HAP-1 (cell line): ENCODE measurements at regions of chr15 and their contacts with region 1.

Region 1: DNA sequence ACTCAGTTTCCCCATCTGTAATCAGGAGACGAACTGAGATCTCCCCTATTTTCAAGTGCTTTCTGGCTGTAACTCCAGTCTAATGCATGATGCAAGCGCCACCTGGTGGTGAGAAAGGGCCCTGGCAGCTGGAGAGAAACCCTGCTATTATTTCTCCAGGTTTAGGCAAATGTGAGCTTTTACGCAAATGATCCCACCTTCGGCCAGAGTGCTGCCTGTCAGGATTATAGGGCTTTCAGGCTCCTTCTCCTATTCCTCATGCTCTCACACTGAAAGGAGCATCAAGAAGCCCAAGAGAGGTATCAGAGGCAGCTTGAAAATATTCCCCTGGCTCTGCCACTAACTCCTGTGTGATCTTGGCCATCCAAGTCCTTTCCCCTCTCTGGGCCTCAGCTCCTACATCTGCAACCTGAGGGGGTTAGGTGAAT is 93.9 kb upstream of the RASGRF1 start:
- DNase-seq: peak; percentile 83 to 90
- H3K4me3 ChIP-seq: no peak overlapping the region
- H3K4me1 ChIP-seq: no peaks in the 10 kb centered on the region
- H3K27me3 ChIP-seq: no peaks in the 10 kb centered on the region; the same call in 1 of the 2 replicates

Region 2: DNA sequence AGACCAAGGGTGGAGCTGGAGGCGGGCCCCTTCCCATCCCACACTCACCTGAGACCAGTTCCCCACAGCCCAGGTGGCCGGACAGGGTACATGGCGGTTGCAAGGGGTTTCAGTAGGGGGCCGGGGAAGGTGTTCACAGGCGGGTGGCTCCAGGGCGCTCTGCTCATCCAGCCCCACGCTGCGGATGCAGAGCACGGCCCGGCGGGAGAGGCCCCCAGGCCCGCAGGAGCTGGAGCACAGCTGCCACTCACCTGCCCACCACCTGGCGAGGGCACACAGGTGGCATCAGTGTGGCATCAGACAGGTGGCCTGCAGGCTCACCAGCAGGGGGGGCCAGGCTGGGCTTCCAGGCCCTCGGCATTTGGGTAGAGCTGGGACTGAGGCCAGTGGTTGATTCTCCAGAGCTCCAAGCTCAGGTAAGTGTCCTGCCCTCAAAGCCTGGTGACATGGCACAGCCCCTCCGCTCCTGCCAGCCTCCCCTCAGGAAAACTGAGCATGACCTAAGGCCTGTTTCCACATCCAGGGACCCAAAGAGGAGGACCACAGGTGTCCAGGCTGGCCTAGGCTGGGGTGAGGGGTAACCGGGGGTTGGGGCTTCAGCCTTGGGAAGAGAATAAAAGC is 417.0 kb before region 1 on chr15:
- in situ Hi-C with region 1: loop called (anchors 25 kb)
- DNase-seq: no peak
- H3K4me3 ChIP-seq: no peak overlapping the region
- H3K4me1 ChIP-seq: no peaks in the 10 kb centered on the region
- H3K27me3 ChIP-seq: no peaks in the 10 kb centered on the region

Region 3: GRCh38 chr15:78938658-78939488 is 245.6 kb before region 1 on chr15:
- in situ Hi-C with region 1: no loop called
- DNase-seq: no peak
- H3K4me3 ChIP-seq: no peak overlapping the region
- H3K4me1 ChIP-seq: no peaks in the 10 kb centered on the region
- H3K27me3 ChIP-seq: peaks cover 6% of the 10 kb centered on the region; the same call in 1 of the 2 replicates

Region 4: GRCh38 chr15:79028411-79028964 is 156.0 kb before region 1 on chr15:
- in situ Hi-C with region 1: loop called (anchors 5 kb)
- DNase-seq: peak; percentile 63 to 85
- H3K4me3 ChIP-seq: no peak overlapping the region
- H3K4me1 ChIP-seq: no peaks in the 10 kb centered on the region
- H3K27me3 ChIP-seq: peaks cover 4% of the 10 kb centered on the region; the same call in 1 of the 2 replicates